AG04450 (cell line): ENCODE measurements at regions of chr16 and their contacts with region 1.

Region 1: GRCh38 chr16:66824006-66824405 is 6.8 kb downstream of the NAE1 start:
- DNase-seq: no peak
- H3K4me3 ChIP-seq: no peak overlapping the region
- H3K27ac ChIP-seq: no peak overlapping the region
- H3K27me3 ChIP-seq: no peaks in the 10 kb centered on the region
- CTCF ChIP-seq: no peak

Region 2: DNA sequence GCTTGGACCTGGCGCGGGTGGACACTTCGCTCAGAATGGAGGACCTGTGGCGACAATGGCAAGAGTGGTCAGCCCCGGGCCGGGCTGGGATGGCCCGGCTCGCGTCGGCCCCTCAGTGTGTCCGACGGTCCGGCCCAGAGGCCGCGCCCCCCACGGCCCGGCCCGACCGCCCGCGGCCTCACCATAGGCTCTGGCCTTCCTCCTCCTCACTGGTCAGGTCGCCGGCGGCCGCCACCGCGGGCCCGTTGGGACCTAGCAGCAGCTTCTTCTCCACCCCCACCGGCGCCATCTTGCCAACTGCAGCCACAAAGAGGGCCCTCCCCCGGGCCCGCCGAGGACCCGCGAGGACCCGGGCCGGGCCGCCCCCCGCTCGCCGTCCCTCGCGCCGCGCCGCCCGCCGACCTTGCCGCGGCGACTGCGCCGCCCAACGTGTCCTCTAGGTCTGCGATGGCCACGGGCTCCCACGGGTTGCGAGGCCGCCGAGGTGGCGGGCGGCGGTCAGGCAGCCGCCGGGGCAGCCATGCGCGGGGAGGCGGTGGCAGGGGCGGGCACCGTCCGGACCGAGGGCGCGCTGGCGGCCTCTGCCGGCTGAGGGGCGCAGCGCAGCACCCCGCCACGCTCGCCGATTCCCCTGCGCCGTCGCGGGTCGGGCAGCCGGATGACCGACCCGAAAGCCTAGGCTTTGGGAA is 72.6 kb before region 1 on chr16 and contains the start of gene DYNC1LI2:
- CTCF ChIA-PET with region 1: interaction called, 23 read pairs
- POLR2A ChIA-PET with region 1: no interaction called
- DNase-seq: peak; percentile 20
- H3K4me3 ChIP-seq: peak within 1 kb of the TSS; percentile 97
- H3K27ac ChIP-seq: peak within 1 kb of the TSS; percentile 31
- H3K27me3 ChIP-seq: peaks cover 6% of the 10 kb centered on the region
- CTCF ChIP-seq: peak; percentile 58
- polyA plus RNA-seq, gene DYNC1LI2: 86.7 and 88.5 TPM in 2 replicates